CD8-positive, alpha-beta T cell (primary cell): ENCODE measurements at regions of chr13 and their contacts with region 1.

Region 1: GRCh38 chr13:26253787-26254582 is at the start of gene CDK8:
- DNase-seq: peak; percentile 78 to 95 (median 90)
- ATAC-seq: peak; percentile 87
- H3K4me3 ChIP-seq: peak within 1 kb of the TSS; percentile 79 to 100
- H3K4me3 Mint-ChIP-seq: peak within 1 kb of the TSS; percentile 90
- H3K27ac ChIP-seq: peak within 1 kb of the TSS; percentile 59 to 92
- H3K27ac Mint-ChIP-seq: peak within 1 kb of the TSS; percentile 88
- H3K4me1 ChIP-seq: peaks cover 27% of the 10 kb centered on the region
- H3K4me1 Mint-ChIP-seq: peaks cover 37% of the 10 kb centered on the region
- H3K27me3 ChIP-seq: no peaks in the 10 kb centered on the region
- H3K27me3 Mint-ChIP-seq: peaks cover 2% of the 10 kb centered on the region
- CTCF ChIP-seq: no peak
- total RNA-seq, gene CDK8: 4.9 to 5.3 TPM

Region 2: DNA sequence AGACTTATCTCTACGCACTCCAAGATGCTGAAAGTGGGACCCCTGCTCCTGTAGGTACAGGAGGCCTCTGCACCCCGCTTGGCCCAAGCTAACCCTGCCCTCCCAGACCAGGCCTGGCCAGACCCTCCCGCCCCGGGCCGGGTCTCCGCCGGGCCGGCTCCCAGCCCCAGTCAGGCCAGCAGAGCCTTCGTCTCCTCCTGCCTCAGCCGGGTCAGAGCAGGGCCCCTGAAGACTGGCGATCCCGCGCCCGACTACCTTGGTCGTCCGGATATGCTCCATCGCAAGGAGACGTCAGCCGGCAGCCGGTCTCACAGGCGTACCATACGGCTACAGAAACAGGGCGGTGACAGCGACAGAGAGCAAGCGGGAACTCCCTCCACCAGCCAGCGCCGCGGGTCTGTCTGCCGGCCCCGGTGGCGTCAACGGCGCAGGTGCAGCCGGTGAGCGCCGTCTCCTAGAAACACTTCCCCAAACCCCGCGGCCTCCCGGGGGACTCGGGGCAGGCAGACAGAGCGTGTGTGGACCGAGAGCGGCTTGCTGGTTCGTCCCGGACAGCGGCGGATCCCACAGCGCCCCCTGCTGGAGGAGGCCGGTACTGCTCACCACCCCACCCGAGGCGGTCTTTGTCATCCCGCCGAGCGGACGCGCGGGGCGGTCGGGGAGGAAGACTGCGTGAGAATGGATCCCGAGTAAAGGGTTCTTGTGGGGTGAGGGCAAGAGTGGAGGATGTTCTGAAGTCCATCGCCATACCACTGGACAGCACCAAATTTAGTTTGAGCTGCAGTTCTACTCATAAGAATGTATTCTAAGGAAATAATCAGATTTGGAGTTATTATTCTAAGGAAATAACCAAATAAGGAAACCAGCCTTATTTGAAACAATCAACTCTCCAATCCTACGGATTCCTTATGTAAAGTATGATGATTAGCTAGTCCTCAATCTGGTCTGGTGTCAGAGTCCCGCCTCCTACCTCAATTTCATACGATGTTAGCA is 966.7 kb before region 1 on chr13 and contains the start of gene MTMR6:
- CTCF ChIA-PET with region 1: no interaction called
- POLR2A ChIA-PET with region 1: no interaction called
- intact Hi-C with region 1: loop called in 1 of 2 experiments (anchors 5 kb)
- DNase-seq: peak; percentile 90 to 98 (median 94)
- ATAC-seq: peak; percentile 81
- H3K4me3 ChIP-seq: peak within 1 kb of the TSS; percentile 83 to 95
- H3K4me3 Mint-ChIP-seq: peak within 1 kb of the TSS; percentile 98
- H3K27ac ChIP-seq: peak within 1 kb of the TSS; percentile 94 to 97
- H3K27ac Mint-ChIP-seq: peak within 1 kb of the TSS; percentile 99
- H3K4me1 ChIP-seq: peaks cover 23% of the 10 kb centered on the region
- H3K4me1 Mint-ChIP-seq: peaks cover 41% of the 10 kb centered on the region
- H3K27me3 ChIP-seq: peaks cover 0 to 2% of the 10 kb centered on the region in 2 experiments
- H3K27me3 Mint-ChIP-seq: peaks cover 10% of the 10 kb centered on the region
- CTCF ChIP-seq: peak; percentile 99
- total RNA-seq, gene MTMR6: 41.9 to 44.4 TPM

Region 3: DNA sequence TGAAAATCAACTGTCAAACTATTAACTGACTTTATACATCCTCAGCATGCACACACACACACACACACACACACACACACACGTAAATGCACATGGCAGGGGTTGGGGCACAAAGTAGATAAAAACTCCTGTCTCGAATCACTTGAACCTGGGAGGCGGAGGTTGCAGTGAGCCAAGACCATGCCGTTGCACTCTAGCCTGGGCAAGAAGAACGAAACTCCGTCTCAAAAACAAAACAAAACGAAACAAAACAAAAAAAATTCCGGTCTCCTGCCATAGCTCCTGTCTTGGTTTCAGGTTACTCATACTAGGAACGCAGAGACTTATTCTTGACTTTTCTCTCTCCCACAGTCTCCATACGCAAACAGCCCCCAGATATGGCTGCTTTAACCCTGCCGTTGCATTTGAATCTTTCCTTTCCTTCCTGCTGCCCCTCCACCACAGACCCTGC is 351.1 kb before region 1 on chr13:
- CTCF ChIA-PET with region 1: no interaction called
- POLR2A ChIA-PET with region 1: no interaction called
- intact Hi-C with region 1: no loop called
- DNase-seq: peak in 2 of 9 experiments; percentile 34 to 50
- ATAC-seq: no peak
- H3K4me3 ChIP-seq: peak overlapping the region in 1 of 2 experiments; percentile 29
- H3K4me3 Mint-ChIP-seq: no peak overlapping the region
- H3K27ac ChIP-seq: no peak overlapping the region
- H3K27ac Mint-ChIP-seq: no peak overlapping the region
- H3K4me1 ChIP-seq: peaks cover 68% of the 10 kb centered on the region
- H3K4me1 Mint-ChIP-seq: peaks cover 43% of the 10 kb centered on the region
- H3K27me3 ChIP-seq: no peaks in the 10 kb centered on the region
- H3K27me3 Mint-ChIP-seq: no peaks in the 10 kb centered on the region
- CTCF ChIP-seq: no peak

Region 4: DNA sequence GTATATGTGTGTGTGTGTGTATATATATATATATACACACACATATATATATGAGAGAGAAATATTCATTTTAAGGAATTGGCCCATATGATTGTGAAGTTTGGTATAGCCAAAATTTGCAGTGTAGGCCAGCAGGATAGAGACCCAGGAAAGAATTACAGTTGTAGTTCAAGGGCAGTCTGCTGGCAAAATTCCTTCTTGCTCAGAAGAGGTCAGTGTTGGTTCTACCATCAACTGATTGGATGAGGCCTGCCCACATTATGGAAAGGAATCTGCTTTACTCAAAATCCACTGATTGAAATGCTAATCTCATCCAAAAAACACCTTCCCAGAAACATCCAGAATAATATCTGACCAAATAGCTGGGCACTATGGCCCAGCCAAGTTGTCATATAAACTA is 55.9 kb before region 1 on chr13:
- CTCF ChIA-PET with region 1: no interaction called
- POLR2A ChIA-PET with region 1: no interaction called
- intact Hi-C with region 1: loop called in 1 of 2 experiments (anchors 2 kb)
- DNase-seq: no peak
- ATAC-seq: no peak
- H3K4me3 ChIP-seq: no peak overlapping the region
- H3K4me3 Mint-ChIP-seq: no peak overlapping the region
- H3K27ac ChIP-seq: no peak overlapping the region
- H3K27ac Mint-ChIP-seq: no peak overlapping the region
- H3K4me1 ChIP-seq: no peaks in the 10 kb centered on the region
- H3K4me1 Mint-ChIP-seq: no peaks in the 10 kb centered on the region
- H3K27me3 ChIP-seq: no peaks in the 10 kb centered on the region
- H3K27me3 Mint-ChIP-seq: no peaks in the 10 kb centered on the region
- CTCF ChIP-seq: no peak

Region 5: DNA sequence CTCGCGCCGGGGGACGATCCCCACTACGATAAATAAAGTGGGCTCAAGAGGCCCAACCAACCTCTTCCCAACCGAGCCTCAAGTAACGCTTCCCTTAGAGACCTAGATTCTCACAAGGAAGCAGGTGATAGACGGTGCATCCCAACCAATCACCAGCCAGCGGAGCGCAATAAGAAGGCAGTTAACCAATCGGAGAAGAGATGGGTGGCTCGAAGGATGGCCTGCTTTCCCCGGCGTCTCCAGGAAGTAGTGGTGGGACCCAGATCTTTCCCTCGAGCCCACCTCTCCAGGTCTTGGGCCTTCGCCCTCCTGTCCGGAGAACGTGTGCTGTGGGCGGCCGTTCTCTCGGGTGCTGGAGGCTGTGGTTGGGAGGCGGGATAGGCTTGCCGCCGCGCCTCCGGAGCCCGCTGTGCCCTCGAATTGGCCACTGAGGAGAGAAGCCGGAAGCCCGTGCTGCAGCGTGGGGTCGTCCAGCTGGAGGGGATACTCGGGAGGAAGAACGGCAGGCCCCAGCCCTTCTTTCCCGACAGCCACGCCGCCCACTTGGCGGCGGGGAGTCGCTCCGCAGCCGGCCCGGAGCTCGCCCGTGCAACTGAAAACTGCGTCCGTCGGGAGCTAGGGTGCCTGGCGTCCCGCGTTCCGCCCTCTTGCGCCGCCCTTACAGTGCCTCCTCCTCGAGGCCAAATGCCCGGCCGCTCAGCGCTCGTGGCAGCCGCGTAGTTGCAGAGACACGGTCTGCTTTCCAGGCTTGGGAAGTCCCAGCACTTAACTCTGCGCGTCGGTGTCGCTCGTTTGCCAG is 32.1 kb before region 1 on chr13 and contains the start of gene RNF6:
- CTCF ChIA-PET with region 1: interaction called, 4 read pairs
- POLR2A ChIA-PET with region 1: interaction called, 25 read pairs
- intact Hi-C with region 1: loop called (anchors 1 kb)
- DNase-seq: peak; percentile 73 to 97 (median 86)
- ATAC-seq: peak; percentile 92
- H3K4me3 ChIP-seq: peak within 1 kb of the TSS; percentile 97 to 99
- H3K4me3 Mint-ChIP-seq: peak within 1 kb of the TSS; percentile 99
- H3K27ac ChIP-seq: peak within 1 kb of the TSS; percentile 90 to 98
- H3K27ac Mint-ChIP-seq: peak within 1 kb of the TSS; percentile 100
- H3K4me1 ChIP-seq: peaks cover 26% of the 10 kb centered on the region
- H3K4me1 Mint-ChIP-seq: peaks cover 45% of the 10 kb centered on the region
- H3K27me3 ChIP-seq: no peaks in the 10 kb centered on the region
- H3K27me3 Mint-ChIP-seq: no peaks in the 10 kb centered on the region
- CTCF ChIP-seq: no peak
- total RNA-seq, gene RNF6: 50.3 to 55.0 TPM

Region 6: GRCh38 chr13:26236296-26236695 is 17.7 kb before region 1 on chr13:
- CTCF ChIA-PET with region 1: no interaction called
- POLR2A ChIA-PET with region 1: no interaction called
- intact Hi-C with region 1: no loop called
- DNase-seq: no peak
- ATAC-seq: no peak
- H3K4me3 ChIP-seq: no peak overlapping the region
- H3K4me3 Mint-ChIP-seq: no peak overlapping the region
- H3K27ac ChIP-seq: no peak overlapping the region
- H3K27ac Mint-ChIP-seq: no peak overlapping the region
- H3K4me1 ChIP-seq: no peaks in the 10 kb centered on the region
- H3K4me1 Mint-ChIP-seq: no peaks in the 10 kb centered on the region
- H3K27me3 ChIP-seq: no peaks in the 10 kb centered on the region
- H3K27me3 Mint-ChIP-seq: peaks cover 13% of the 10 kb centered on the region
- CTCF ChIP-seq: no peak

Region 7: GRCh38 chr13:26482451-26483197 is 228.6 kb after region 1 on chr13:
- CTCF ChIA-PET with region 1: no interaction called
- POLR2A ChIA-PET with region 1: no interaction called
- intact Hi-C with region 1: loop called in 1 of 2 experiments (anchors 5 kb)
- DNase-seq: peak; percentile 21 to 89 (median 72)
- ATAC-seq: peak; percentile 98
- H3K4me3 ChIP-seq: no peak overlapping the region
- H3K4me3 Mint-ChIP-seq: peak overlapping the region; percentile 39
- H3K27ac ChIP-seq: peak overlapping the region in 1 of 2 experiments; percentile 11
- H3K27ac Mint-ChIP-seq: peak overlapping the region; percentile 55
- H3K4me1 ChIP-seq: peaks cover 23% of the 10 kb centered on the region
- H3K4me1 Mint-ChIP-seq: peaks cover 13% of the 10 kb centered on the region
- H3K27me3 ChIP-seq: no peaks in the 10 kb centered on the region
- H3K27me3 Mint-ChIP-seq: no peaks in the 10 kb centered on the region
- CTCF ChIP-seq: peak; percentile 85

Region 8: DNA sequence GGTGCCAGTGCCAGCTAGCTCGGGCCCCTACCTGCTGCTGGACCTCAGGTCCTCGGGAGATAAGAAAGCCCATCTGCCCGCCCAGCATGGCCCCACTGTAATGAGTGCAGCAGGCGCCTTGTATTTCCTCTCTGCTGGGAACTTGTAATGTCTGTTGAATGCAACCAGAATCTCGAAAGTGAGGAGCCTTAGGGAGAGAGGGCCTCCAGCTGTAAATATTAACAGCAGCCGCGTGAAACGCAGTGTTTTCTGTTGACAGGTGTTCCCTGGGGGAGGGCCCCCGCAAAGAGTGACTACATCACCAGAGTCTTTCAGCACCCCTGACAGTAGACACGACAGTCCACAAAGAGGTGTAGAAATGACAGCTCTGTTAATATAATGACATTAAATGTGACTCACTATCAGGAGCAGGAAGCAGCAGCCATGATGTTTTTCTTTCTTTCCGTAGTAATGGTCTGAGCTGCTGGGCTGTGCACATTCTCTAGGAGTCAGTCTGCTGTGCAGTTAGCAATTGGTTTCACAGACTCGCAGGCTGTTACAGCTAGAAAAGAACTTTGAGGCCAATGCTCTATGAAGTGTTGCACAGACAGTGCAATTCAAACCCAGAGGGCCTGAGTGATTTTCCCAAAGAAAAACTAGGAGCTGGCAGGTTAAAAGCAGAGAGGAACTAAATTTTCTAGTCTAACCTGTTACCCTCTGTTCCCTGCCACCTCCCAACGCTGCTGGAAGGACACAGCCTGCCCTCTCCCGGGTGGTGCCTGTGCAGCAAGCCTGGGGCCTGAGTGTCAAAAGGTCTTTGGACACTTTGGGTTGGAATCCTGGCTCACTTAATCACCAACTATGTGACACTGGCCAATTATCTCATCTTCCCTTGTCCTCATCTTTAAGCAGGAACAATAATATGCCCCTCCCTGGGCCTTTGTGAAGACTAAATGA is 244.9 kb after region 1 on chr13:
- CTCF ChIA-PET with region 1: no interaction called
- POLR2A ChIA-PET with region 1: no interaction called
- intact Hi-C with region 1: loop called in 1 of 2 experiments (anchors 1 kb)
- DNase-seq: no peak
- ATAC-seq: no peak
- H3K4me3 ChIP-seq: no peak overlapping the region
- H3K4me3 Mint-ChIP-seq: no peak overlapping the region
- H3K27ac ChIP-seq: no peak overlapping the region
- H3K27ac Mint-ChIP-seq: no peak overlapping the region
- H3K4me1 ChIP-seq: no peaks in the 10 kb centered on the region
- H3K4me1 Mint-ChIP-seq: peaks cover 4% of the 10 kb centered on the region
- H3K27me3 ChIP-seq: no peaks in the 10 kb centered on the region
- H3K27me3 Mint-ChIP-seq: peaks cover 11% of the 10 kb centered on the region
- CTCF ChIP-seq: no peak

Region 9: GRCh38 chr13:26680123-26680450 is 426.1 kb after region 1 on chr13:
- CTCF ChIA-PET with region 1: no interaction called
- POLR2A ChIA-PET with region 1: no interaction called
- intact Hi-C with region 1: no loop called
- DNase-seq: no peak
- ATAC-seq: no peak
- H3K4me3 ChIP-seq: no peak overlapping the region
- H3K4me3 Mint-ChIP-seq: no peak overlapping the region
- H3K27ac ChIP-seq: no peak overlapping the region
- H3K27ac Mint-ChIP-seq: no peak overlapping the region
- H3K4me1 ChIP-seq: no peaks in the 10 kb centered on the region
- H3K4me1 Mint-ChIP-seq: no peaks in the 10 kb centered on the region
- H3K27me3 ChIP-seq: no peaks in the 10 kb centered on the region
- H3K27me3 Mint-ChIP-seq: peaks cover 19% of the 10 kb centered on the region
- CTCF ChIP-seq: no peak